ENCODE measurements at regions of chr3 and their contacts with region 1.

Region 1: GRCh38 chr3:16884084-16884747 is 539 bp upstream of the PLCL2 start:
- DNase-seq: peak; percentile 55
- H3K4me3 ChIP-seq: peak overlapping the region; percentile 93 to 97 (median 95)
- H3K27ac ChIP-seq: peak overlapping the region; percentile 50
- H3K4me1 ChIP-seq: peaks cover 16% of the 10 kb centered on the region
- H3K27me3 ChIP-seq: no peaks in the 10 kb centered on the region
- CTCF ChIP-seq: peak; percentile 66 to 86
- POLR2A ChIP-seq: no peak

Region 2: DNA sequence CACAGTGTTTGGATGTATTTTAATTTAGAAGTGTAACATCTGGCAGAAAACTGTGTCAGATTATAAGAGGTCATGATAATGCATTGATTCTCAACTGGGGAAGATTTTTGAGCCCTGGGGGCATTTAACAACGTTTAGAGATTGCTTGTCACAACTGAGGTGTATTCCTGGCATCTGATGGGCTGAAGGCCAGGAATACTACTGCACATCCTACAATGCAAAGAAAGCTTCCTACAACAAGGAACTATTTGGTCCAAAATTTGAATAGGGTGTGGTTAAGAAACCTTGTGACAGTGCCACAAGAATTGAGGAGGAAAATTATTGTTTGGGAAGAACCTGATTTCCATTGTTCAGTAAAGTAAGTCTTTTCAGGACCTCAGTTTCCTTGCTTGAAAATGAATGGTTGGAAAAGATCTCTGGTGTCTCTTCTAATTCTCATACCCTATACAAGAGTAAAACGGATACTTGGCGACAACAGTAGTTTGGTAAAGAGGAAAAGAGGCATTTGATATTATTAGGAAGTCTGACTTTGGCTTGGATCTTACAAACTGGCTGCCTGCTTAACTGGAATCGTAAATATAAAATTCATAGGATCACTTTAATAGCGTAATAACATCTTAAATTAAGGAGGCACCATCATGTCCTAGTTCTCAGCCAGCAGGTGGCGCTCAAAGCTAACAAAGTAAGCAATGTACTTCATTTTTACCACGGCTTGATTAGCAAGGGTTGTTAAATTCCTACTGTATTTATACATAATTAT is 283.3 kb before region 1 on chr3:
- CTCF ChIA-PET with region 1: interaction called, 4 read pairs
- POLR2A ChIA-PET with region 1: no interaction called
- dilution Hi-C with region 1: no loop called
- intact Hi-C with region 1: loop called (anchors 5 kb)
- DNase-seq: peak; percentile 80
- H3K4me3 ChIP-seq: no peak overlapping the region
- H3K27ac ChIP-seq: no peak overlapping the region
- H3K4me1 ChIP-seq: no peaks in the 10 kb centered on the region
- H3K27me3 ChIP-seq: peaks cover 0 to 6% of the 10 kb centered on the region in 2 experiments
- CTCF ChIP-seq: peak; percentile 56 to 61
- POLR2A ChIP-seq: no peak

Region 3: GRCh38 chr3:16849795-16850194 is 34.4 kb before region 1 on chr3:
- CTCF ChIA-PET with region 1: interaction called, 6 read pairs
- POLR2A ChIA-PET with region 1: no interaction called
- dilution Hi-C with region 1: no loop called
- intact Hi-C with region 1: loop called (anchors 1 kb)
- DNase-seq: peak; percentile 81
- H3K4me3 ChIP-seq: no peak overlapping the region
- H3K27ac ChIP-seq: peak overlapping the region; percentile 62
- H3K4me1 ChIP-seq: peaks cover 14% of the 10 kb centered on the region
- H3K27me3 ChIP-seq: no peaks in the 10 kb centered on the region
- CTCF ChIP-seq: no peak
- POLR2A ChIP-seq: no peak

Region 4: GRCh38 chr3:16871915-16872842 is 12.0 kb before region 1 on chr3:
- CTCF ChIA-PET with region 1: interaction called, 39 read pairs
- POLR2A ChIA-PET with region 1: no interaction called
- dilution Hi-C with region 1: no loop called
- intact Hi-C with region 1: no loop called
- DNase-seq: peak; percentile 31
- H3K4me3 ChIP-seq: no peak overlapping the region
- H3K27ac ChIP-seq: peak overlapping the region; percentile 12
- H3K4me1 ChIP-seq: peaks cover 3% of the 10 kb centered on the region
- H3K27me3 ChIP-seq: no peaks in the 10 kb centered on the region
- CTCF ChIP-seq: no peak
- POLR2A ChIP-seq: no peak

Region 5: GRCh38 chr3:16945330-16945729 is 61.1 kb after region 1 on chr3:
- CTCF ChIA-PET with region 1: no interaction called
- POLR2A ChIA-PET with region 1: no interaction called
- dilution Hi-C with region 1: no loop called
- intact Hi-C with region 1: loop called (anchors 2 kb)
- DNase-seq: peak; percentile 58
- H3K4me3 ChIP-seq: no peak overlapping the region
- H3K27ac ChIP-seq: no peak overlapping the region
- H3K4me1 ChIP-seq: no peaks in the 10 kb centered on the region
- H3K27me3 ChIP-seq: no peaks in the 10 kb centered on the region
- CTCF ChIP-seq: no peak
- POLR2A ChIP-seq: no peak

Region 6: GRCh38 chr3:17039580-17039979 is 155.4 kb after region 1 on chr3:
- CTCF ChIA-PET with region 1: interaction called, 15 read pairs
- POLR2A ChIA-PET with region 1: no interaction called
- dilution Hi-C with region 1: no loop called
- intact Hi-C with region 1: no loop called
- DNase-seq: peak; percentile 88
- H3K4me3 ChIP-seq: no peak overlapping the region
- H3K27ac ChIP-seq: peak overlapping the region; percentile 56
- H3K4me1 ChIP-seq: peaks cover 25% of the 10 kb centered on the region
- H3K27me3 ChIP-seq: no peaks in the 10 kb centered on the region
- CTCF ChIP-seq: no peak
- POLR2A ChIP-seq: no peak

Region 7: DNA sequence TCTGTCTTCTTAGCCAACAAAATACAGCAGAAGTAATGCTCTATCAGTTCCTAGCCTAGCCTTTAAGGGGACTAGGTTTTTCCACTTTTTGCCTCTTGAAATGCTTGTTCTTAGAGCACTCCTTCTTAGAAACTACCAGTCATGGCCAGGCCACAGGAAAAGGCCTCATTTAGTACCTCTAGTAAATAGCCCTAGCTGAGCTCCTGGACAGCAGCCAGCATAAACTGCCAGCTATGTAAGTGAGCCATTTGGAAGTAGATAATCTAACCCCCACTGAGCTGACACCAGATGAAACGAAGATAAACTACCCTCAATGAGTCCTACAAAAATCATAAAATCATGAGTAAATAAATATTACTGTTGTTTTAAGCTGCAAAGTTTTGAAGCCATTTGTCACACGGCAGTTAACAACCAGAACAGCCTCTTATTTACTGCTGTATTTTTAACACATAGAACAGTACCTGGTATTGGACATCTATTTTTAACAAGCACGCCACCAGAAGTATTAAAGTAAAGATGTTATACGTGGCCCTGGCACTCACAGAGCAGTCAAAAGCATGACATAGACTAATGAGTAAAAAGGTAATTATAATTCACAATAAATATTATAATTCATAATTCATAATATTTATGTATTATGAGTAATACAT is 846.2 kb after region 1 on chr3:
- CTCF ChIA-PET with region 1: no interaction called
- POLR2A ChIA-PET with region 1: no interaction called
- dilution Hi-C with region 1: no loop called
- intact Hi-C with region 1: no loop called
- DNase-seq: peak; percentile 60
- H3K4me3 ChIP-seq: no peak overlapping the region
- H3K27ac ChIP-seq: no peak overlapping the region
- H3K4me1 ChIP-seq: peaks cover 3% of the 10 kb centered on the region
- H3K27me3 ChIP-seq: no peaks in the 10 kb centered on the region
- CTCF ChIP-seq: no peak
- POLR2A ChIP-seq: no peak

Region 8: DNA sequence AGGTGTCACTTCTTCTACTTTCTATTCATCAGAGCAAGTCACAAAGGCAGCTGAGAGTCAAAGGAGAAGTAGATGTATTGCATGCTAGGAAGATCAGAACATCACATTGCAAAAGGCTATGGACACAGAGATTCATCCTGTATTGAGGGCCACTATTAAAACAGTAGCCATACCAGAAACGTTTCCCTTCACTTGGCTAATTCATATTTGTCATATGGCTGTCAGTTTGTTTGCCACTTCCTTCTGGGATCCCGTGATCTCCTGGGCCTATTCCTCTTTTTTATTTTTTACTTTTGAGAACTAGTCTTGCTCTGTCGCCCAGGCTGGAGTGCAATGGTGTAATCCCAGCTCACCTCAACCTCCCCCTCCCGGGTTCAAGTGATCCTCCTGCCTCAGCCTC is 1725.0 kb after region 1 on chr3:
- CTCF ChIA-PET with region 1: no interaction called
- POLR2A ChIA-PET with region 1: no interaction called
- dilution Hi-C with region 1: no loop called
- intact Hi-C with region 1: no loop called
- DNase-seq: no peak
- H3K4me3 ChIP-seq: no peak overlapping the region
- H3K27ac ChIP-seq: no peak overlapping the region
- H3K4me1 ChIP-seq: no peaks in the 10 kb centered on the region
- H3K27me3 ChIP-seq: no peaks in the 10 kb centered on the region
- CTCF ChIP-seq: no peak
- POLR2A ChIP-seq: no peak